Activated CD8-positive, alpha-beta memory T cell treated with anti-CD3 and anti-CD28 coated beads, Interleukin-2, amount 10 ng/mL, durations not matched to agents 7 days and 5 days (primary cell): ENCODE measurements at regions of chr7 and their contacts with region 1.

Region 1: DNA sequence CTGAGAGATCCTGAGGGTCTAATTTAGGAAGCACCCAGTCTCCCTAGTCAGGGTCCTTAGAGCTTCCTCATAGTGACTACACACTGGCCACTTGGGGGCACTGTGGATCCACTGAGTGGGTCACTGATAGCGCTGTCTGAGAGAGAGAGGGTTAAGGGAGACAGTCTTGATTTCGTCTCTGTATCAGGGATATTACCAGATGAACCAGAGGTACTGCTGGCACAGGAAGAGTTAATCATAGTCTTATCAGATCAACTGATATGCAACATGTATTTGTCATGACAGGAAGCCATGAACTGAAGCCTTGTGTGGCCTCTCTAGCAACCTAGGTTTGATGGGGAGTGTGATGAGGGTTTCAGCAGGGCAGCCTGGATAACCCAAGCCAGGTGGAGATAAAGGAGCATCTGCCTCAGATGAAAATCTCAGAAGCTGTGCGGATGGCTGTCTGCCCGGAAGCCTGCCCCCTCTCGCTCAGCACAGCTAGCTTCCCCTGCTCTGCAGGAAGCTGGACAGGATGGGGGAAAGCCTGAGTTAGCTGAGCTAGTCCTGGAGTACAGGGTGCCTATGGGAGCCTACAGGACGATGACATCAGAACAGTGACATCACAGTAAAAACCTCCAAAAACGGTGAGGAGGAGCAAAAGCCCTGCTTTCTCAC is 214.0 kb upstream of the PRSS1 start:
- DNase-seq: peak; percentile 87
- ATAC-seq: peak; percentile 92
- H3K4me3 Mint-ChIP-seq: peak overlapping the region; percentile 69
- H3K27ac Mint-ChIP-seq: peak overlapping the region; percentile 86
- H3K4me1 Mint-ChIP-seq: peaks cover 29% of the 10 kb centered on the region
- H3K27me3 Mint-ChIP-seq: peaks cover 7% of the 10 kb centered on the region

Region 2: DNA sequence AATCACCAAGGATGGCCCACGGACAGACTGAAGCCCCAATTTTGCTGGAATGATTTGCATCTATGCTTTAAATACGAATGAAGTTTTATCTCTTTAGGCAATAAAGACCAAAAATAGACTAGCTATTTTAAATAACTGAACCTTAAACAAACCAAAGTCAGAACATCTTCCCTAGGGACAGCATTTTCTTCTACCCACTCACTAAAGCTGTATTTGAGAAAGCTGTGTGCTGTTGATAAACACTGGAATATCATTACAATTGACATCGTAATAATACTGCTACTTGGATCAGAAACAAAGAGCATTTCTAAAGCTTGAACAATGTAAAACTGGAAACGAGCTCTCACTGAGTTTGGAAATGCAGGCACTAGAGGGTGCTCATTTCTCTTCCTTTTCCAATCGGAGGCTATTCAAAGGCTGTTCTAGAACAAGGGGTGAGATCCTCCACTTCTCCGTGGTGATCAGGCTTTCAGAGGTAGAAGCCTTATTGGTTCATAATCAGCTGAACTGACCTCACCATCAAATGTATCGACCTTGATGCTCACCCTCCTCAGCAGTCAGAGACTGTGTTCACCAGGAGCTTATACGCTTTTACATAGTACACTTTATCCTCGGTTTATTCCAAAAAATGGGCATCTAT is 11.3 kb before region 1 on chr7:
- CTCF ChIA-PET with region 1: interaction called, 12 read pairs
- DNase-seq: no peak
- ATAC-seq: no peak
- H3K4me3 Mint-ChIP-seq: no peak overlapping the region
- H3K27ac Mint-ChIP-seq: no peak overlapping the region
- H3K4me1 Mint-ChIP-seq: no peaks in the 10 kb centered on the region
- H3K27me3 Mint-ChIP-seq: peaks cover 2% of the 10 kb centered on the region

Region 3: DNA sequence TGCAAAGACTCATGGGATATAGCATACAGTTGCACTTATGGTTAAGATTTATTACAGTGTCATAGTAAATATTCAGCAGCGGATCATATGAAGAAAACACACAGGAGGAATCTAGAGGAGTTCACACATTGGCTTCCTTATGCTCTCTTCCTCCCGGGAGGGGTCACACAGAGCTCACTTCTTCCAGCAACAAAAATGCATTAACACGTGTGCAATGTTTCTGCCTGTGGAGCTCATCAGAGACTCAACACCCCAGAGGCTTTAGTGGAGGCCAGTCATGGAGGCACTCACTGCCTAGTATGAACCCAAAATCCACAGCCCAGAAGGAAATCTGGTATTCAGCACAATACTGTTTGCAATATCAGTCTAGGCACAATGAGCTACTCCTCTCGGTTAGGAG is 11.2 kb after region 1 on chr7:
- CTCF ChIA-PET with region 1: interaction called, 10 read pairs
- DNase-seq: no peak
- ATAC-seq: no peak
- H3K4me3 Mint-ChIP-seq: no peak overlapping the region
- H3K27ac Mint-ChIP-seq: no peak overlapping the region
- H3K4me1 Mint-ChIP-seq: peaks cover 2% of the 10 kb centered on the region
- H3K27me3 Mint-ChIP-seq: peaks cover 5% of the 10 kb centered on the region

Region 4: GRCh38 chr7:142557971-142558582 is 22.8 kb after region 1 on chr7:
- CTCF ChIA-PET with region 1: interaction called, 13 read pairs
- DNase-seq: peak; percentile 54
- ATAC-seq: peak; percentile 79
- H3K4me3 Mint-ChIP-seq: peak overlapping the region; percentile 41
- H3K27ac Mint-ChIP-seq: peak overlapping the region; percentile 28
- H3K4me1 Mint-ChIP-seq: peaks cover 24% of the 10 kb centered on the region
- H3K27me3 Mint-ChIP-seq: peaks cover 10% of the 10 kb centered on the region

Region 5: DNA sequence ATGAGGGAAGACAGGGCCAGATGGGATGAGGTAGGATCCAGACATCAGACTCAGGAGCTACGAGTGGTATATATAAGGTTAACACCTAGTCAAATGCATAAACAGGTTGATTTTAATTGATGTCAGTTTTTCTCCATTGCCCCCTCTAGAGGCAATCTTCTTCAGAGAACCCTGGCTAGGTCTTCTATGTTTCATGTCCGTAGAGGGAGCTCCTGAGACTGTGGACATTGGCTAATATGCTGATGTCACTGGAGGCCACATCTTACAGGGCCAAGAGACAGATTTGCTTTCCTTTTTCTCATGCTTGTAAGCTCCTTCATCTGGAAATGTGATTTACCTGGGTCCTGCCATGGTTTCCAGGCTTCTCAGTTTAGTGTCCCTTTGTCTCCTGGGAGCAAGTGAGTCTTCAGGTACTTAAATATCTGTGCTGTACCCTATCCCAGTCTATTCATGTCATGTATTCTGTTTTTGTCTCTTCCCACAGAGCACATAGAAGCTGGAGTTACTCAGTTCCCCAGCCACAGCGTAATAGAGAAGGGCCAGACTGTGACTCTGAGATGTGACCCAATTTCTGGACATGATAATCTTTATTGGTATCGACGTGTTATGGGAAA is 52.4 kb after region 1 on chr7:
- CTCF ChIA-PET with region 1: interaction called, 21 read pairs
- DNase-seq: no peak
- ATAC-seq: peak; percentile 88
- H3K4me3 Mint-ChIP-seq: no peak overlapping the region
- H3K27ac Mint-ChIP-seq: no peak overlapping the region
- H3K4me1 Mint-ChIP-seq: peaks cover 4% of the 10 kb centered on the region
- H3K27me3 Mint-ChIP-seq: no peaks in the 10 kb centered on the region

Region 6: DNA sequence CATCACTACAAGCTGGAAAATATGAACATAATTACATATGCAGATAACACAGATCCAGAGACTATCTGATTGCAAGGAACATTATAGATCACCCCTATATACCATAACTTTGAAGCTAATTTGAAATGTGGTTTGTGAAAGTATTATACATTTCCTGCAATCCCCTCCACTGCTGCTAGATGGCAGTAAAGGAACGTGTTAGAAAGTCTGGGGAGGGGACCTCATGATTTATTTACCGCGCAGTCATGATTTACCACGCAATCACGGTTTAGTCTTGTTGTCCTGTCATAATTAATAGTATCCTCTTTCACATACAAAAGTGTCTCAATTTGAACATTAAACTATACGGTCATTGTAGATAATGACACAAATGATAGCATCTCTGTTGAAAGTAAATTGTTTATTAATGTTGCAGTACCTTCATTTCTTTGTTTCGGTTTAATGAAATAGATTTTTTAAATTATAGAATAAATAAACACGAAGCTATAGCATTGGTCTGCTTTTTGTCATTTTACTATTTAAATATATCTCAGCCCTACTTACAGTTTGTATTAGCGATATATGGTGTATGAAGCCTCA is 68.7 kb after region 1 on chr7:
- CTCF ChIA-PET with region 1: interaction called, 15 read pairs
- DNase-seq: peak; percentile 55
- ATAC-seq: peak; percentile 58
- H3K4me3 Mint-ChIP-seq: no peak overlapping the region
- H3K27ac Mint-ChIP-seq: no peak overlapping the region
- H3K4me1 Mint-ChIP-seq: peaks cover 7% of the 10 kb centered on the region
- H3K27me3 Mint-ChIP-seq: peaks cover 6% of the 10 kb centered on the region

Region 7: DNA sequence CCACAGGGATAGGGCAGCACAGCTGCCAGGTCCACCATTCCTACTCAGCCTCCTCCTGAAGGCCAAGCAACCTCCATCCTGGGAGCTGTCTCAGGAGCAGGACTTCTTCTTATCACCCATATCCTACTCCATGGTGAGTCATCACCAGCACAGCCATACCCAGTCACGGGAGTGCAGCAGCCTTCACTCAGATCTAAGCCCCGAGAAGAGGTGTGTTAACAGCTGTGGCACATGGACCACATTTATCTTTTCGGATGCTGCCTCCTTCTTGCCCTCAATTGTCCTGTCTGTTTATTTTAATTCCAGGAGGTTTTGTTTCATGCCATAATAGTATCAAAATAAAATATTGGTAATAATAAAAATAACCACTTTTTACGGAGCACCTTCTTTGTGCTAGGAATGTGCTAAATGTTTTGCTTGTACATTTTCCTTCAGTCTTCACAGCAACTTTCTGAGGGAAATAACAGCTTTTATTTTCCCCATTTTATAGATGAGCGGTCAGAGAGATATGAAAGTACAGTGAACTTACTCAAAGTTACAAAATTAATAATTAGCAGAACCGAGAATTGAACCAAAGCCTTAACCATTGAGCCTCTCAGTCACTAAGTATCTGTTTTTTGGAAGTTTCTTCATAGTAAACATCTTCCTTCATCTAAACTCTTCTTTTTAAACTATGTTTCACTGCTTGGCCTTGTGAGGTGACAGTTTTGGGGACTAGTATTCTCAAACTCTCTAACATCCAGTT is 429.4 kb after region 1 on chr7:
- CTCF ChIA-PET with region 1: no interaction called
- DNase-seq: no peak
- ATAC-seq: no peak
- H3K4me3 Mint-ChIP-seq: no peak overlapping the region
- H3K27ac Mint-ChIP-seq: no peak overlapping the region
- H3K4me1 Mint-ChIP-seq: no peaks in the 10 kb centered on the region
- H3K27me3 Mint-ChIP-seq: peaks cover 25% of the 10 kb centered on the region